ENCODE measurements at regions of chr2 and their contacts with region 1.

Region 1: DNA sequence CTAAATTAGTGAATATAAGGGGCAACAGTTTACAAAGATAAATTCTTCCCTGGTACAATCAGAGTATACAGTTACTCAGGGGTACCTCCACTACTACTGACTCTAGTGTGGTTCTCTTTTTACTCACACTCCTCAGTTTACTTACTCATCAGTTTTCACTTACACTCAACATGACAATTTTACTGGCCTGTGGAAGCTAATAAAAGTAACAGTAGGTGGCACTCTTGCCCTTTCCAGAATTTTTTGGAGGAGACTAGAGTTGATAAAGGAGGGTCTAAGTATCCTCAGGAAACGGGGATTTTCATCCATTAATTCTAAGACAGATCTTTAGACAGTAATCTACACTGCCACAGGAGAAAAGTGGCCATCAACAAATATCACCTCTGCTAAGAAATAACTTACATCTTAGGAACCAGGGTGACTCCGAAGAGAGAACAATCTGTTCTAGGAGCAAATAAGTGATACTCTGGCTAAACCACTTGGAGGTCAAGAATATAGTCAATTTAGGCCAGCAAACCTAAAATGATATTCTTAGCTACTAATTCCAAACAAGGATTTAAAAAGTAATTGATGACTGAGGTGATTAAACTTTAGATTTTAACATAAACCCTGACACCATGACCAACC is 61.3 kb downstream of the ATL2 start:
- DNase-seq: peak in 1 of 2 experiments; percentile 66
- H3K4me3 ChIP-seq: no peak overlapping the region
- H3K4me3 Mint-ChIP-seq: no peak overlapping the region
- H3K27ac Mint-ChIP-seq: no peak overlapping the region
- H3K4me1 ChIP-seq: no peaks in the 10 kb centered on the region
- H3K4me1 Mint-ChIP-seq: no peaks in the 10 kb centered on the region
- H3K27me3 ChIP-seq: no peaks in the 10 kb centered on the region
- H3K27me3 Mint-ChIP-seq: no peaks in the 10 kb centered on the region
- CTCF ChIP-seq: peak; percentile 53 to 60

Region 2: GRCh38 chr2:38293152-38293865 is 22.5 kb before region 1 on chr2:
- CTCF ChIA-PET with region 1: no interaction called
- POLR2A ChIA-PET with region 1: no interaction called
- intact Hi-C with region 1: no loop called
- DNase-seq: no peak
- H3K4me3 ChIP-seq: no peak overlapping the region
- H3K4me3 Mint-ChIP-seq: no peak overlapping the region
- H3K27ac Mint-ChIP-seq: no peak overlapping the region
- H3K4me1 ChIP-seq: peaks cover 15% of the 10 kb centered on the region
- H3K4me1 Mint-ChIP-seq: peaks cover 17% of the 10 kb centered on the region
- H3K27me3 ChIP-seq: no peaks in the 10 kb centered on the region
- H3K27me3 Mint-ChIP-seq: no peaks in the 10 kb centered on the region
- CTCF ChIP-seq: no peak

Region 3: DNA sequence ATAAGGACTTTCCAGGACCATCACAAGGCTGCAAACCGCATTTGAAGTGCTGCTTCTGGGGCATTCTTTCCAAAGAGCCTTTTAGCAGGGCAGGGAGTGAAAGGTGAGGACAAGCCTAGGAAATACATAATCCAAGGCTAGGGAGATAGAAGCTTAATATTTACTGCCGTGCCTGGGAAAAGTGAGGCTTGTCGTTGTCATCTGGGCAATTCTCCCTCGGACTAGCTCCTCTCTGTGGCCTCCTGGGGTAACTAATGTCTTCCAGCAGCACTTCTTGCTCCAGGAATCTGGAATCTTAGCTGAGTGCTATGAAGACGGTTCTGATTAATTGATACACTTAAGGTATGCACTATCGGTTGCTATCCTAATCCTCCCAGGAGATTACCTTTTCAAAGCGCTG is 130.6 kb after region 1 on chr2:
- CTCF ChIA-PET with region 1: interaction called, 7 read pairs
- POLR2A ChIA-PET with region 1: no interaction called
- intact Hi-C with region 1: loop called (anchors 5 kb)
- DNase-seq: no peak
- H3K4me3 ChIP-seq: no peak overlapping the region
- H3K4me3 Mint-ChIP-seq: no peak overlapping the region
- H3K27ac Mint-ChIP-seq: no peak overlapping the region
- H3K4me1 ChIP-seq: no peaks in the 10 kb centered on the region
- H3K4me1 Mint-ChIP-seq: peaks cover under 1% of the 10 kb centered on the region
- H3K27me3 ChIP-seq: no peaks in the 10 kb centered on the region
- H3K27me3 Mint-ChIP-seq: no peaks in the 10 kb centered on the region
- CTCF ChIP-seq: no peak

Region 4: DNA sequence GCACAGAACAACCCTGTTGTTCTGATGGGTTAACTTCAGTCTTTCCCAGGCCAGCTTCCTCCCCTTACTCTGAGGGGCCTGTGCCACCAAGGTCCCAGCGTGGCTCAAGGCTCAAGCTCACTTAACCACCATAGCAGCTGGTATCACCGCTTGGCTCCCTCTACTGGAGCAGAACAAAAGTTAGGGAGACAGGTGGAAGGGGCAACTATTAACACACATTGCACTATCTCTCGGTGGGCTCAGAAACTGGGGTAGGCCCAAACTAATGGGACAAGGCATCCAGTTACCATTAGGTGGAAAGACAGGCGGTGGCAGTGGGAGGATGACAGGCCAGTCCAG is 149.9 kb after region 1 on chr2:
- CTCF ChIA-PET with region 1: interaction called, 14 read pairs
- POLR2A ChIA-PET with region 1: no interaction called
- intact Hi-C with region 1: loop called (anchors 2 kb)
- DNase-seq: peak; percentile 42 to 48
- H3K4me3 ChIP-seq: no peak overlapping the region
- H3K4me3 Mint-ChIP-seq: no peak overlapping the region
- H3K27ac Mint-ChIP-seq: no peak overlapping the region
- H3K4me1 ChIP-seq: no peaks in the 10 kb centered on the region; the same call in 1 of the 2 replicates
- H3K4me1 Mint-ChIP-seq: no peaks in the 10 kb centered on the region
- H3K27me3 ChIP-seq: no peaks in the 10 kb centered on the region
- H3K27me3 Mint-ChIP-seq: no peaks in the 10 kb centered on the region
- CTCF ChIP-seq: peak; percentile 38 to 69

Region 5: GRCh38 chr2:38508311-38509039 is 192.7 kb after region 1 on chr2:
- CTCF ChIA-PET with region 1: interaction called, 26 read pairs
- POLR2A ChIA-PET with region 1: no interaction called
- intact Hi-C with region 1: loop called (anchors 1 kb)
- DNase-seq: peak; percentile 88 to 89
- H3K4me3 ChIP-seq: no peak overlapping the region
- H3K4me3 Mint-ChIP-seq: no peak overlapping the region
- H3K27ac Mint-ChIP-seq: no peak overlapping the region
- H3K4me1 ChIP-seq: no peaks in the 10 kb centered on the region
- H3K4me1 Mint-ChIP-seq: no peaks in the 10 kb centered on the region
- H3K27me3 ChIP-seq: no peaks in the 10 kb centered on the region
- H3K27me3 Mint-ChIP-seq: no peaks in the 10 kb centered on the region
- CTCF ChIP-seq: peak; percentile 81 to 93

Region 6: GRCh38 chr2:39289609-39290008 is 973.8 kb after region 1 on chr2:
- CTCF ChIA-PET with region 1: no interaction called
- POLR2A ChIA-PET with region 1: no interaction called
- intact Hi-C with region 1: no loop called
- DNase-seq: no peak
- H3K4me3 ChIP-seq: no peak overlapping the region
- H3K4me3 Mint-ChIP-seq: no peak overlapping the region
- H3K27ac Mint-ChIP-seq: no peak overlapping the region
- H3K4me1 ChIP-seq: no peaks in the 10 kb centered on the region
- H3K4me1 Mint-ChIP-seq: no peaks in the 10 kb centered on the region
- H3K27me3 ChIP-seq: no peaks in the 10 kb centered on the region
- H3K27me3 Mint-ChIP-seq: no peaks in the 10 kb centered on the region
- CTCF ChIP-seq: no peak